Heart right ventricle (tissue), 16 donors: ENCODE measurements at regions of chr2 and their contacts with region 1.

Region 1: DNA sequence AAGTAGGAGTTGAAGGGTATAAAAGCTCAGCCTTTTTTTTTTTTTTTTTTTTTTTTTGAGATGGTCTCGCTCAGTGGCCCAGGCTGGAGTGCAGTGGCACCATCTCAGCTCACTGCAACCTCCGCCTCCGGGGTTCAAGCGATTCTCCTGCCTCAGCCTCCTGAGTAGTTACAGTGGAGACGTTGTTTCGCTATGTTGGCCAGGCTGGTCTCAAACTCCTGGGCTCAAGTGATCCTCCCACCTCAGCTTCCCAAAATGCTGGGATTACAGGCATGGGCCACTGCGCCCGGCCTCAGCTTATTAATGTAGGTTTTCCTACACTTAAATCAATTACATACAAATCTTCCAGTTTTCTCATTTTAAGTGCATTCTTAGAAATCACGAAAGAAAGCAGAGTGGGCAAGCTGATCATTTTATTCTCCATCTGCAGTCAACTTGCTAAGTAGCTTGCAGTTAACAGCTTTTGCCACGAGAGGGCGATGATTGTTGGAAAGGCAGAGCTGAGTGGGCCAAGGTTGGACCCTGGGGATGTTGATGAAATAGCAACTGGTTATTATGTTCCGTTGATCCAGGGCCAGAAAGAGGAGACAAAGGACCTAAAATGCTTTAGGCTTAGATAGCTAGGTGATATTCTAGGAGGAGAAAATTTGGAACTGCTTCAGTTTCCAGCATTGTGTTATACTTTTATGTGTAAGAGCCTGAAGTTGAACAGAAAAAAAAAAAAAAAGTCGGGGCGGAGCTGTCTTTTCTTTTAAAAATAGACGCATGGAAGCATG is 234.4 kb upstream of the EPAS1 start:
- DNase-seq: peak; percentile 53 to 94
- ATAC-seq: peak; percentile 74 to 88 (median 78)
- H3K4me3 ChIP-seq: peak overlapping the region in 1 of 10 donors; percentile 4
- H3K27ac ChIP-seq: peak overlapping the region in 9 of 10 donors; percentile 56 to 90 (median 70)
- H3K4me1 ChIP-seq: peaks cover 3 to 76% (median 33%) of the 10 kb centered on the region in 9 donors
- H3K27me3 ChIP-seq: no peaks in the 10 kb centered on the region
- CTCF ChIP-seq: peak; percentile 84 to 95 (median 90)

Region 2: DNA sequence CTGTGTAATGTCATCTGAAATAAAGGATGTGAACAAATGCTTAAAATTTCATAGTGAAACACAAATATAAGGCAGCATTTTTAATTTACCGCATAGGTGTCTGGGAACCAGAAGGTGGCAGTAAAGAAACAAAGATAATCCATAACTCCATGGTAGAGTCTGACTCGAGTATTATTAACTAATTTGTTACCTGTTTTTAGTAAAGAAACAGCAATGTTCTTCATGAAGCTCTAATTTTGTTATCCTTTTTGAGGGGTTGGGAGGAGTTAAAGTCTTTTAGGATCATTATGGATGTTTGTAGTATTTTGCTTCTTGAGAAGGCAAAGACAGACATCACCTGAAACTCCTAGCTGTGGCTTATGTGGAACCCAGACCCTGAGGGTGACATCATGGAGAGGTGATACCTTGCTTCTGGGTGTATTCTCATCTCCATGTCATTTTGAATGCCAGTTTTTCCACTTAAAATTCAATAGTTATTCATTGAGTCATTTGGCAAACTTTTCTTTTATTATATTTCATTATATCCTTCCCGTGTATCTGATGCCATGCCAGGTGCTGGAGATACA is 51.8 kb before region 1 on chr2:
- intact Hi-C with region 1: loop called in 4 of 10 experiments (anchors 5 kb)
- DNase-seq: no peak
- ATAC-seq: peak in 5 of 8 donors; percentile 45 to 77 (median 60)
- H3K4me3 ChIP-seq: no peak overlapping the region
- H3K27ac ChIP-seq: peak overlapping the region in 2 of 10 donors; percentile 19 to 22
- H3K4me1 ChIP-seq: peaks cover 0 to 43% (median 19%) of the 10 kb centered on the region in 9 donors
- H3K27me3 ChIP-seq: no peaks in the 10 kb centered on the region
- CTCF ChIP-seq: peak; percentile 21 to 81 (median 72)

Region 3: GRCh38 chr2:46020416-46020815 is 42.4 kb before region 1 on chr2:
- intact Hi-C with region 1: loop called in 3 of 10 experiments (anchors 5 kb)
- DNase-seq: no peak
- ATAC-seq: no peak
- H3K4me3 ChIP-seq: no peak overlapping the region
- H3K27ac ChIP-seq: no peak overlapping the region
- H3K4me1 ChIP-seq: peaks cover 0 to 40% (median 14%) of the 10 kb centered on the region in 9 donors
- H3K27me3 ChIP-seq: no peaks in the 10 kb centered on the region
- CTCF ChIP-seq: no peak

Region 4: GRCh38 chr2:46029332-46029811 is 33.5 kb before region 1 on chr2:
- intact Hi-C with region 1: loop called in 2 of 10 experiments (anchors 5 kb)
- DNase-seq: peak; percentile 25 to 69
- ATAC-seq: peak; percentile 80 to 95 (median 92)
- H3K4me3 ChIP-seq: no peak overlapping the region
- H3K27ac ChIP-seq: peak overlapping the region in 9 of 10 donors; percentile 36 to 90 (median 74)
- H3K4me1 ChIP-seq: peaks cover 0 to 52% (median 20%) of the 10 kb centered on the region in 9 donors
- H3K27me3 ChIP-seq: no peaks in the 10 kb centered on the region
- CTCF ChIP-seq: peak in 8 of 9 donors; percentile 27 to 61 (median 52)

Region 5: GRCh38 chr2:46117379-46117778 is 54.6 kb after region 1 on chr2:
- intact Hi-C with region 1: loop called in 2 of 10 experiments (anchors 5 to 10 kb)
- DNase-seq: no peak
- ATAC-seq: peak in 1 of 8 donors; percentile 66
- H3K4me3 ChIP-seq: no peak overlapping the region
- H3K27ac ChIP-seq: peak overlapping the region in 9 of 10 donors; percentile 56 to 89 (median 84)
- H3K4me1 ChIP-seq: peaks cover 6 to 77% (median 54%) of the 10 kb centered on the region in 9 donors
- H3K27me3 ChIP-seq: no peaks in the 10 kb centered on the region
- CTCF ChIP-seq: no peak

Region 6: DNA sequence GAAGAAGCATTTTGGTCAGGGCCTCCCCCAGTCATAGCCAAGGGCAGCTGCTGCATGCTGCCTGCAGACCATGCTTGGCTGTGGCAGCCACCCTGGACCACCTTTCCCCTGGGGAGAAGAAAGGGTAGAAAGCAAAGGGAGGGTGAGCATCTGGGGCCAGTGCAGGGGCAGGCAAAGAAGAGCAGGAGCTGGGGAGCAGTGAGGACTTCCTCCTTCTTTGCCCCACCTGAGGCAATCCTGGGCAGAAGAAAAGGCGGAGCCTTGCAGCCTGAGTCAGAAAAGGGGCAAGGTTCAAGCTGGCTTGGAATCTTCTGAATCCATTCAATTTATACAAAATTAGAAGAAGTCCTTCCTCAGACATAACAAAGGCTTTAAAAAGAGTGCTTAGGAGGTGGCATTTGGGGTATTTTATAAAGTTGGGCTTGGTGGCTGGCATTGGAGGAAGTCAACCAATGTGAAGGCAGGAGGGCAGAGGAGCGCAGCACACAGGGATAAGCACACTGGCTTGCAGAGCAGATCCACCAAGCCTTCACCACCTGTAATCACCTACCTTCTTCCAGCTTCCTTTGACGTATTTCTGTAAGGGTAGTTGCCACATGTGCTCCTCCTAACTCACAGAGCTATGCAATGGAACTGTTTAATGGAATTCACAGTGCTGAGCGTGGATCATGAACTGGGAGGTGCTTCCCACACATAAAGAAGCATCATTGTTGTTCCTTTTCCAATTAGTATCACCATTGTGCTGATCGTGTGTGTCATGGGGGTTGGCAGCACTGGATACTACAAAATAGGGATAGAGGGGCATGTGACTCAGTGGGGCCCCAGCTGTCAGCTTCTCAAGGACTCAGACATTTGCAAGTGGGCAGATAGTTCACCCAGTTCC is 80.0 kb after region 1 on chr2:
- intact Hi-C with region 1: no loop called
- DNase-seq: no peak
- ATAC-seq: peak in 2 of 8 donors; percentile 39 to 44
- H3K4me3 ChIP-seq: no peak overlapping the region
- H3K27ac ChIP-seq: peak overlapping the region in 1 of 10 donors; percentile 10
- H3K4me1 ChIP-seq: peaks cover 0 to 47% (median 24%) of the 10 kb centered on the region in 9 donors
- H3K27me3 ChIP-seq: no peaks in the 10 kb centered on the region
- CTCF ChIP-seq: no peak

Region 7: DNA sequence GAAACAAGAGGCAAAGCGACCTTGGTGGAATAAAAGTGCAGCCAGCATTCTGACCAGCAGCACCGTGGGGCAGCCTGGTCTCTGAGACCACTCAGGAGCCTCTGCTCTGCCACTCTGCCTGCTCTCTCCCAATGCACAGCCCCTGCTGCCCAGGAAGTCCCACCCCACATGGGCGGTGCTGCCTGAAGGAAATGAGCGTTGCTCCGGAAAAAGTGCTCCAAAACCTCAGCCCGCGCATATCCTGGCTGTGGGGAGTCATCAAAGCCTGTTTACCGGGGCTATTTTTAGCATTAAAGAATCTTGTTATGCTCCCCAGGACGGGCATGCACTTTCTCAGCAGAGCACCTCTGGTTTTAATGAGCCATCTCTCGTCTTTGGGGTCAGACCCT is 288.9 kb after region 1 on chr2:
- intact Hi-C with region 1: loop called in 2 of 10 experiments (anchors 5 kb)
- DNase-seq: peak; percentile 57 to 75
- ATAC-seq: peak; percentile 48 to 87 (median 62)
- H3K4me3 ChIP-seq: peak overlapping the region in 7 of 10 donors; percentile 1 to 36 (median 22)
- H3K27ac ChIP-seq: peak overlapping the region; percentile 61 to 84 (median 76)
- H3K4me1 ChIP-seq: peaks cover 34 to 100% (median 86%) of the 10 kb centered on the region in 9 donors
- H3K27me3 ChIP-seq: no peaks in the 10 kb centered on the region
- CTCF ChIP-seq: no peak

Region 8: DNA sequence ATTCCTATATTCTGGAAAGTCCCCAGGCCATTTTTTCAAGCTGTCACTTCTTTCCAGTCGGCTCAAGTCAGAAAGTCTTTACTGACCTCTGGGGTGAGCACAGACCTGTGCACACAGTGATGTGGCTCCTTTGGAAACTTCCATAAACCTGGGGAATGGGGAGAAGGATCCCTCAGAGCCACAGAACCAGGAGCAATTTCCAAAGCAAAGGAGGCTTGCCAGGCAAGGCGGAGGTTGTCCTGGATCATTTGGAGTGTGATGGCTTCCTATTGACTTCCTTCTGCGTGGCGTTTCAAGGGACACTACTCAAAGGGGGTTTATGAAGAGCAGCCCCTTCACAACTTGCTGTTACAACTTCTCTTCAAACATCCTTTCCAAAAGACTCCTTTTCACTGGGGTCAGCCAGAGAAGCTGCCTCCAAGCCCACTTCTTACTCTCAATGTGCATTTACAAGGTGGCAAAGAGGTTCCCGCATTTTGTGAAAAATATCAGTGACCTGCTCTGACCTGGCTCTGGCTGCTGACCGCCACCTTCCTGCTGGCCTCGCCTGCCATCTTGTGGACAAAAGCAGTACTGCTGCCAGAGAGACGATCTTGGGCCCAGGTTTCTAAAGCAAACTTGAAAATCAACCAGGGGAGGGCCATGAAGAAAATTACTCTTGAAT is 398.3 kb after region 1 on chr2:
- intact Hi-C with region 1: loop called in 2 of 10 experiments (anchors 2 to 5 kb)
- DNase-seq: peak; percentile 81 to 83
- ATAC-seq: peak; percentile 47 to 85 (median 68)
- H3K4me3 ChIP-seq: no peak overlapping the region
- H3K27ac ChIP-seq: peak overlapping the region in 9 of 10 donors; percentile 34 to 79 (median 66)
- H3K4me1 ChIP-seq: peaks cover 11 to 48% (median 32%) of the 10 kb centered on the region in 9 donors
- H3K27me3 ChIP-seq: no peaks in the 10 kb centered on the region
- CTCF ChIP-seq: peak; percentile 98 to 100 (median 99)